CD4-positive, alpha-beta T cell (primary cell): ENCODE measurements at regions of chr5 and their contacts with region 1.

Region 1: GRCh38 chr5:141968914-141969608 is at the start of gene RNF14:
- DNase-seq: peak; percentile 86 to 97 (median 90)
- ATAC-seq: peak; percentile 95
- H3K4me3 ChIP-seq: peak within 1 kb of the TSS; percentile 76
- H3K4me3 Mint-ChIP-seq: peak within 1 kb of the TSS; percentile 98
- H3K27ac ChIP-seq: peak within 1 kb of the TSS; percentile 90 to 95
- H3K27ac Mint-ChIP-seq: peak within 1 kb of the TSS; percentile 99
- H3K4me1 ChIP-seq: peaks cover 15% of the 10 kb centered on the region
- H3K4me1 Mint-ChIP-seq: peaks cover 41% of the 10 kb centered on the region
- H3K27me3 ChIP-seq: no peaks in the 10 kb centered on the region
- H3K27me3 Mint-ChIP-seq: no peaks in the 10 kb centered on the region
- CTCF ChIP-seq: peak; percentile 97
- total RNA-seq, gene RNF14: 8.9 to 10.7 TPM

Region 2: GRCh38 chr5:141650851-141651727 is 318.0 kb before region 1 on chr5 and contains the start of gene FCHSD1:
- CTCF ChIA-PET with region 1: no interaction called
- POLR2A ChIA-PET with region 1: interaction called, 11 read pairs
- intact Hi-C with region 1: no loop called
- DNase-seq: peak; percentile 62 to 88 (median 76)
- ATAC-seq: peak; percentile 91
- H3K4me3 ChIP-seq: peak within 1 kb of the TSS; percentile 86
- H3K4me3 Mint-ChIP-seq: peak within 1 kb of the TSS; percentile 86
- H3K27ac ChIP-seq: peak within 1 kb of the TSS; percentile 26 to 83
- H3K27ac Mint-ChIP-seq: peak within 1 kb of the TSS; percentile 54
- H3K4me1 ChIP-seq: peaks cover 28% of the 10 kb centered on the region
- H3K4me1 Mint-ChIP-seq: peaks cover 38% of the 10 kb centered on the region
- H3K27me3 ChIP-seq: no peaks in the 10 kb centered on the region
- H3K27me3 Mint-ChIP-seq: peaks cover 3% of the 10 kb centered on the region
- CTCF ChIP-seq: no peak
- total RNA-seq, gene FCHSD1: 79.8 to 86.8 TPM

Region 3: DNA sequence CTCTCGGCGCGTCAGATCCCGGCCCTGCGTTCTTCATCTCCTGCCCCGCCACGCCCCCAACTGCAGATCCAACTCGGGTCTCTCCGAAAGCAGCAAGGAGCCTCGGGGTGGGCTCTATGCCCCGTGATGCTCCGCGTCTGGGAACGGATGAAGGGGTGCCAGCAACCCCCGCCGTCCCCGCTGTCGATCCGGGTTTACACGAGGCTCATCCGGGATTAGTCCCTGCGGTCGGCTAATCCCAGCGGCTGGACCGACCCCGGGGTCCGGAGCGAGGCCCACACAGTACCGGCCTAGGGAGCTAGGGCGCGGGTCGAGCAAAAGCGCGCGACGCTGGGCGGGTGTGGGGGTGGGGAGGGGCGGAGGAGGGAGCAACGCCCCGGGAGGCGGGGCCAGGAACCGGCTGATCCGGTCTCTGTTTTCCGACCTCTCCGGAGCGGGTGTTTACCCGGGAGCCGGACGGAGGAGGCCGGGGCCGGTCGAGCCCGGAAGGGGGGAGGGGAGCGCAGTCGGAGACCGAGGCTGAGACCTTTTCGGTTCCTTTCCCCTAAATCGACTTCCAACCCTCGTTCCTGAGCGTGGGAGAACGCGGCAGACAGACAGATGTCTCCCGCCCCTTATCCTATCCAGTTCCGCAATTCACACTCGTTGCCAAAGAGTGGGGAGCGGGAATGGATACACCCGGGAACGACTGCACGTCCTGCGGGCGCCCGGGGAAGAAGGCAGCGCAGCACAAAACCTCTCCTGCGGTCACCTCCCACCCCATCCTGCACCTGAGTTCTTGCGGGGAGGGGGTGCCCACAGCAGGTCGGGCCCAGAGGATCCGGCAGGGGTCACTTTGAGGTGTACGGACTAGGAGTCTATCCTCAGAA is 119.5 kb before region 1 on chr5:
- CTCF ChIA-PET with region 1: no interaction called
- POLR2A ChIA-PET with region 1: interaction called, 13 read pairs
- intact Hi-C with region 1: no loop called
- DNase-seq: peak; percentile 51 to 86 (median 69)
- ATAC-seq: peak; percentile 77
- H3K4me3 ChIP-seq: peak overlapping the region; percentile 81
- H3K4me3 Mint-ChIP-seq: peak overlapping the region; percentile 90
- H3K27ac ChIP-seq: peak overlapping the region; percentile 64 to 71
- H3K27ac Mint-ChIP-seq: peak overlapping the region; percentile 80
- H3K4me1 ChIP-seq: peaks cover 14% of the 10 kb centered on the region
- H3K4me1 Mint-ChIP-seq: peaks cover 10% of the 10 kb centered on the region
- H3K27me3 ChIP-seq: no peaks in the 10 kb centered on the region
- H3K27me3 Mint-ChIP-seq: no peaks in the 10 kb centered on the region
- CTCF ChIP-seq: no peak

Region 4: GRCh38 chr5:141933151-141933550 is 35.9 kb before region 1 on chr5:
- CTCF ChIA-PET with region 1: no interaction called
- POLR2A ChIA-PET with region 1: no interaction called
- intact Hi-C with region 1: no loop called
- DNase-seq: no peak
- ATAC-seq: no peak
- H3K4me3 ChIP-seq: no peak overlapping the region
- H3K4me3 Mint-ChIP-seq: no peak overlapping the region
- H3K27ac ChIP-seq: no peak overlapping the region
- H3K27ac Mint-ChIP-seq: no peak overlapping the region
- H3K4me1 ChIP-seq: peaks cover under 1% of the 10 kb centered on the region
- H3K4me1 Mint-ChIP-seq: peaks cover under 1% of the 10 kb centered on the region
- H3K27me3 ChIP-seq: no peaks in the 10 kb centered on the region
- H3K27me3 Mint-ChIP-seq: no peaks in the 10 kb centered on the region
- CTCF ChIP-seq: no peak

Region 5: DNA sequence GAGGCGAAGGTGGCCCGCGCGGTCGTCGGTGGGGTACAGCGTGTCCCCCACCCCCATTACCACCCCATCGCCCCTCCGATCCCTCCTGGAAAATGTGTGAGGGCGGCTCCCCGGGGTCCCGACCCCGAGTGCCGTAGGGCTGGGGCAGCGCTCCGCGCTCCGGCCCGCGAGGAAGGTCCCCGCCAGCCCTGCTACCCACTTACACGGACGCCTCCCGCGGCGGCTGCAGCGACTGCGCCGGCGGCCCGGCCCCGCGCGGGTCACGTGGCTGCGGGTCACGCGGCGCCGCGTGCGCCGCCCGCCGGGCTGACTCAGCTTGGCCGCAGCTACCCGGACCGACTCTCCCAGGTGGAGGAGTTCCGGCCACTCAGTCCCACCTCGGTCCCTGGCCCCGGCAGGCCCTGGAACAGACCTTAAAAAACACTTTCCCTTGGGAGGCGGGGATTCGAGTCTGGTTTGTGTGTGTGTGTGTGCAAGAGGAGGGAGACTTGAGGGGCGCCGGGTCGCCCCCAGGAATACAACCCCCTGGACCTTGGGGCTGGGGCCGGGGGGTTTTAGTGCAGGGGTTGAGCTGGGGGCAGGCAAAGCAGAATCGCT is 43.8 kb after region 1 on chr5 and contains the start of gene GNPDA1:
- CTCF ChIA-PET with region 1: interaction called, 5 read pairs
- POLR2A ChIA-PET with region 1: interaction called, 12 read pairs
- intact Hi-C with region 1: loop called in 1 of 2 experiments (anchors 5 kb)
- DNase-seq: peak; percentile 24 to 87 (median 57)
- ATAC-seq: peak; percentile 60
- H3K4me3 ChIP-seq: peak within 1 kb of the TSS; percentile 86
- H3K4me3 Mint-ChIP-seq: peak within 1 kb of the TSS; percentile 90
- H3K27ac ChIP-seq: peak within 1 kb of the TSS; percentile 60 to 73
- H3K27ac Mint-ChIP-seq: peak within 1 kb of the TSS; percentile 89
- H3K4me1 ChIP-seq: peaks cover 67% of the 10 kb centered on the region
- H3K4me1 Mint-ChIP-seq: peaks cover 84% of the 10 kb centered on the region
- H3K27me3 ChIP-seq: no peaks in the 10 kb centered on the region
- H3K27me3 Mint-ChIP-seq: no peaks in the 10 kb centered on the region
- CTCF ChIP-seq: no peak
- total RNA-seq, gene GNPDA1: 5.8 to 6.6 TPM

Region 6: GRCh38 chr5:142032747-142033631 is 63.9 kb after region 1 on chr5:
- CTCF ChIA-PET with region 1: no interaction called
- POLR2A ChIA-PET with region 1: no interaction called
- intact Hi-C with region 1: no loop called
- DNase-seq: no peak
- ATAC-seq: no peak
- H3K4me3 ChIP-seq: no peak overlapping the region
- H3K4me3 Mint-ChIP-seq: no peak overlapping the region
- H3K27ac ChIP-seq: no peak overlapping the region
- H3K27ac Mint-ChIP-seq: no peak overlapping the region
- H3K4me1 ChIP-seq: peaks cover 18% of the 10 kb centered on the region
- H3K4me1 Mint-ChIP-seq: peaks cover 21% of the 10 kb centered on the region
- H3K27me3 ChIP-seq: no peaks in the 10 kb centered on the region
- H3K27me3 Mint-ChIP-seq: no peaks in the 10 kb centered on the region
- CTCF ChIP-seq: no peak

Region 7: GRCh38 chr5:142108432-142109330 is 139.6 kb after region 1 on chr5 and contains the start of gene NDFIP1:
- CTCF ChIA-PET with region 1: interaction called, 6 read pairs
- POLR2A ChIA-PET with region 1: interaction called, 34 read pairs
- intact Hi-C with region 1: no loop called
- DNase-seq: peak; percentile 72 to 94 (median 84)
- ATAC-seq: peak; percentile 70
- H3K4me3 ChIP-seq: peak within 1 kb of the TSS; percentile 75
- H3K4me3 Mint-ChIP-seq: peak within 1 kb of the TSS; percentile 95
- H3K27ac ChIP-seq: peak within 1 kb of the TSS; percentile 89 to 99
- H3K27ac Mint-ChIP-seq: peak within 1 kb of the TSS; percentile 98
- H3K4me1 ChIP-seq: peaks cover 41% of the 10 kb centered on the region
- H3K4me1 Mint-ChIP-seq: peaks cover 79% of the 10 kb centered on the region
- H3K27me3 ChIP-seq: no peaks in the 10 kb centered on the region
- H3K27me3 Mint-ChIP-seq: no peaks in the 10 kb centered on the region
- CTCF ChIP-seq: no peak
- total RNA-seq, gene NDFIP1: 185 to 192 TPM